Motor neuron (in vitro differentiated cells): ENCODE measurements at regions of chr10 and their contacts with region 1.

Region 1: GRCh38 chr10:44857363-44858016 is 53.6 kb upstream of the TMEM72 start:
- ATAC-seq: peak; percentile 34 to 86 (median 74)
- H3K4me3 ChIP-seq: no peak overlapping the region
- H3K27ac ChIP-seq: no peak overlapping the region
- H3K4me1 ChIP-seq: peaks cover 2 to 6% of the 10 kb centered on the region in 2 donors

Region 2: DNA sequence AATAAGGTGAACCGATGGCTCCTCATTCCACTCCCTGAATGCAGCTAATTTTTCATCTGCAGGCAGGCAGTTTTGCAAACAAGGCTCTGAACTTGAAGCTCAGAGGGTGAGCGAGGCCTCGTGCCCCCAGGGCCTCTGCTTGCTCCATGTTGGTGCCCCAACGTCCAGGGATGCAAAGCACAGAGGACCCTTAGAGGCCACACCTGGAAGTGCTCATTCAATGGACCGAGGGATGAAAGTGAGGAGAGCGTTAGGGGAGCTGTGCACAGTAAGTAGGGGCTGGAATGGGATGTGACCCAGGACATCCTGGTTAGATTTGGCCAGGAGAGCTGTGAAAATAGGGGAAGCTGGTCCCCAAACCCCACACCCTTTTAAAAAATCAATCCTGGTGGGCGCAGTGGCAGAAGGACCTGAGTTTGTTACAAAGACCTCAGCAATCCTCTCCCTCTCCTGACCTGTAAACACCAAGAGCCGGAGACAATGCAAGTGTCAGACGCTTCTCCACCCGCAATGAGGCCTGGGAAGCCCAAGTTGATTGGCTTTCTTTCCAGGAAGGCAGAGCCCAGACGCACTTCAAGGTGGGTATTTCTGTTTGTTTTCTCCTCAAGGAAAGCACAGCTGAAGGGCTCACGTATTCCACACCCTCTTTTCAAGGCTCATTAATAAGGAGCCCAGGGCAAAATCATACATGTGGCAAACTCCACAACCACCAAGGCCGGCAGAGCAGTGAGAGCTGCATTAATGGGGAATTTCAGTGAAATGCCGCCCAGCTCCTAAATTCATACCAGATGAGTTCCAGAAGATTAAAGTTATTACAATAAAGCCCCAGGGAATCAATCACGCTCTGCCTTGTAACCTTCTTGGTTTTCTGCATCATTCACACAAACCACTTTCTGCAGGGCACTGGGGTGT is 458.5 kb before region 1 on chr10:
- in situ Hi-C with region 1: loop called in 4 of 9 experiments (anchors 10 to 25 kb)
- ATAC-seq: peak in 5 of 8 experiments; percentile 25 to 95 (median 94)
- H3K4me3 ChIP-seq: no peak overlapping the region
- H3K27ac ChIP-seq: no peak overlapping the region
- H3K4me1 ChIP-seq: peaks cover 17 to 24% of the 10 kb centered on the region in 2 donors

Region 3: GRCh38 chr10:44809652-44810051 is 47.8 kb before region 1 on chr10:
- in situ Hi-C with region 1: no loop called
- ATAC-seq: peak in 3 of 8 experiments; percentile 32 to 75 (median 39)
- H3K4me3 ChIP-seq: no peak overlapping the region
- H3K27ac ChIP-seq: no peak overlapping the region
- H3K4me1 ChIP-seq: no peaks in the 10 kb centered on the region

Region 4: DNA sequence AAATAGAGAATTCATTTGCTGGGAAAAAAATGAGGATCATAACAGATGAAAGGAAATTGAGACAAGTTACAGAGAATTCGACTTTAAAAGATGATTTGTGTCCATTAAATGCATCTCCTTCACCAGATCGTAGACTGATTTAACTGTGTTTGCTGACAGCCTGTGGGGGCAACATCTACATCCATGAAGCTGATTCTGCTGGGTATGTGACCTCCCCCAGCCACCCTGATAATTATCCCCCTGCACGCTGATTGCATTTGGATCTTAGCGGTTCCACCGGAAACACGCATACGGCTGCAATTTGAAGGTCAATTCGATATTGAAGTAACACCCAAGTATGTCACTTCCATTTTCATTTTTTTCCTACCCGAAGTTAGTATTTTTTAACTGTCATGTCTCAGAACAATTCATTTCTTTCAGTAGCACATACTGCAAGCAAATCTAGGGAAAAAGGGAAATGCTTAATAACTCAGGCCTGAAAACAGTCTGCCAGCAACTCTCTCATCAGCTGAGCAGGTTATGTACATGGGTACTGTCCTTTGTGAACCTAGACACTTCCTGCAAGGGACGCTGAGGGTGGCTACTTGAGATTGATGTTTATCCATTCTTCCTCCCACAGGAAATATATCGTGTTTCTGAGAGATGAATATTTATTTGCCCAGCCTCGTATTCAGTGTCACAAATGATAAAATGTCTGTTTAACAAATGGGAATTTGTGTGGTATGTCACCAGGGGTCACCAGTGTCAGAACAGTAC is 278.1 kb after region 1 on chr10:
- in situ Hi-C with region 1: no loop called
- ATAC-seq: peak in 6 of 8 experiments; percentile 51 to 86 (median 80)
- H3K4me3 ChIP-seq: no peak overlapping the region
- H3K27ac ChIP-seq: peak overlapping the region; percentile 16 to 30
- H3K4me1 ChIP-seq: peaks cover 6 to 16% of the 10 kb centered on the region in 2 donors